Panc1 (cell line): ENCODE measurements at regions of chr11 and their contacts with region 1.

Region 1: DNA sequence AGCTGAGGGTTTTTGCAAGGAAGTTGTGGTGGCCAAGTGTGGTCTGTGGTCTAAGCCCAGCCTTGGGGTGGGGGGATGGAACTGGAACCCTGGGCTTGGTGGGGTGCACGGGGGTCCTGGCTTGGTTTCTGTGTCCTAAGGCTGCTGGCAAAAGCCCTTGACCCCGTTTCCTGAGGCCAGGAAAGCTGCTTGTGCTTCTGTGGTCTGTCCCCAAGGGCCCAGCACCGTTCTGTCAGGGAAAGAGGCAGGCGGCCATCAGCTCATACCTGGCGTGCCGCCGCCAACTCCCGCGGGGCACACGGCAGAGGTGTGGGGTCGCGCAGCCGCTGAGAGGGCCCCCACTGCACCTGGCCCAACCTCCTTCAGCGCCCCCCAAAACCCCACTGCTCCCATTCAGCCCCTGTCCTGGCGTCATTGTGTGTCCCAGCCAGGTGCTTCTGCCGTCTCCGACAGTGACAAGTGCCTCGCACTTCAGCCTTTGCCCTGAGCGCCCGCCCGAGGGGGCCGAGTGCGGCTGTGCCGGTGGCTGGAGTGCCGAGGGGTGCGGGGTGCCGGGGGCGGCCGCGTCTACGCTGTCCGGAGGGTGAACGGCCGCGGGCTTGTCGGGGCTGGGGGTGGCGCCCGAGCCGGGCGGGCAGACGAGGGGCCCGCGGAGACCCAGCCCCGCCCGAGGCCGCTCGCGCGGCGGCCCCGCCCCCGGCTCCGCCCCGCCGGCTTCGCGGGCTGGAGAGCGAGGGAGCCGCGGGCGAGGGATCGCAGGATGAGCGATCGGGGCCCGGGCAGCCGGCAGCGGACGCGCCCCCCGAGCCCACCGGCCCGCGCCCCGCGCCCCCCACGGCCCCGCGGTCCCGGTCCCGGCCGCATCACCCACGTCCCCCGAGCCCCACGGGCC is at the start of gene CNIH2:
- DNase-seq: no peak
- ATAC-seq: peak; percentile 70
- H3K4me3 ChIP-seq: peak within 1 kb of the TSS; percentile 40 to 49
- H3K27ac ChIP-seq: peak within 1 kb of the TSS; percentile 63; the same call in 1 of the 2 replicates
- H3K4me1 ChIP-seq: peaks cover 25% of the 10 kb centered on the region
- H3K27me3 ChIP-seq: no peaks in the 10 kb centered on the region
- CTCF ChIP-seq: no peak
- total RNA-seq, gene CNIH2: 9.3 TPM

Region 2: GRCh38 chr11:66157179-66157864 is 120.4 kb before region 1 on chr11:
- CTCF ChIA-PET with region 1: interaction called, 27 read pairs
- POLR2A ChIA-PET with region 1: no interaction called
- in situ Hi-C with region 1: no loop called
- intact Hi-C with region 1: no loop called
- DNase-seq: no peak
- ATAC-seq: no peak
- H3K4me3 ChIP-seq: no peak overlapping the region
- H3K27ac ChIP-seq: no peak overlapping the region
- H3K4me1 ChIP-seq: no peaks in the 10 kb centered on the region
- H3K27me3 ChIP-seq: no peaks in the 10 kb centered on the region
- CTCF ChIP-seq: no peak

Region 3: GRCh38 chr11:66638177-66639065 is 360.7 kb after region 1 on chr11 and contains the start of gene RBM4:
- CTCF ChIA-PET with region 1: no interaction called
- POLR2A ChIA-PET with region 1: interaction called, 14 read pairs
- in situ Hi-C with region 1: no loop called
- intact Hi-C with region 1: no loop called
- DNase-seq: peak; percentile 99
- ATAC-seq: peak; percentile 96
- H3K4me3 ChIP-seq: peak within 1 kb of the TSS; percentile 91 to 93
- H3K27ac ChIP-seq: peak within 1 kb of the TSS; percentile 97
- H3K4me1 ChIP-seq: peaks cover 47% of the 10 kb centered on the region
- H3K27me3 ChIP-seq: no peaks in the 10 kb centered on the region
- CTCF ChIP-seq: no peak
- total RNA-seq, gene RBM4: 195 TPM